ENCODE measurements at regions of chr7 and their contacts with region 1.

Region 1: GRCh38 chr7:50745336-50745735 is 37.4 kb downstream of the GRB10 start:
- DNase-seq: no peak
- ATAC-seq: no peak
- H3K4me3 ChIP-seq: no peak overlapping the region
- H3K4me3 Mint-ChIP-seq: no peak overlapping the region
- H3K27ac ChIP-seq: no peak overlapping the region
- H3K27ac Mint-ChIP-seq: no peak overlapping the region
- H3K4me1 ChIP-seq: peaks cover 4% of the 10 kb centered on the region
- H3K4me1 Mint-ChIP-seq: peaks cover 9% of the 10 kb centered on the region
- H3K27me3 ChIP-seq: no peaks in the 10 kb centered on the region
- H3K27me3 Mint-ChIP-seq: no peaks in the 10 kb centered on the region
- CTCF ChIP-seq: no peak

Region 2: DNA sequence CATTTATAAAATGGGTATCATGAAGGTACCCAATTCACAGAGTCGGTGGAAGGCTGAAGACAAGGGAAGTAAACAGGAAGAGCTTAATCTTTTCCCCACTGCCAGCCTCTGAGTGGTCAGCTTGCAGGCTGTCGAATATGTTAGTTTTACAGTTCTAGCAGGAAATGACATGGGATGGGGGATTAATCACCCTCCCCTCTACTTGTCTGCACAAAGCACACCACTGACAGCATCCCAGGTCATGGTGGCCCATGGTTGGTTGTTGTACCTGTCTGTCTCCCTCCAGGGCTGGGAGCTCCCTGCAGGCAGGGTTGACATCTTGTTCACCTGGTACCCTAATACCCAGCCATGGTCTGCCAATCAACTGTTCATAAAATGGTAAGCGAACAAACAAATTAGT is 18.3 kb before region 1 on chr7:
- CTCF ChIA-PET with region 1: no interaction called
- POLR2A ChIA-PET with region 1: no interaction called
- intact Hi-C with region 1: loop called in 1 of 2 experiments (anchors 2 kb)
- DNase-seq: no peak
- ATAC-seq: no peak
- H3K4me3 ChIP-seq: no peak overlapping the region
- H3K4me3 Mint-ChIP-seq: no peak overlapping the region
- H3K27ac ChIP-seq: no peak overlapping the region
- H3K27ac Mint-ChIP-seq: no peak overlapping the region
- H3K4me1 ChIP-seq: peaks cover 10% of the 10 kb centered on the region
- H3K4me1 Mint-ChIP-seq: peaks cover 11% of the 10 kb centered on the region
- H3K27me3 ChIP-seq: no peaks in the 10 kb centered on the region
- H3K27me3 Mint-ChIP-seq: no peaks in the 10 kb centered on the region
- CTCF ChIP-seq: no peak

Region 3: DNA sequence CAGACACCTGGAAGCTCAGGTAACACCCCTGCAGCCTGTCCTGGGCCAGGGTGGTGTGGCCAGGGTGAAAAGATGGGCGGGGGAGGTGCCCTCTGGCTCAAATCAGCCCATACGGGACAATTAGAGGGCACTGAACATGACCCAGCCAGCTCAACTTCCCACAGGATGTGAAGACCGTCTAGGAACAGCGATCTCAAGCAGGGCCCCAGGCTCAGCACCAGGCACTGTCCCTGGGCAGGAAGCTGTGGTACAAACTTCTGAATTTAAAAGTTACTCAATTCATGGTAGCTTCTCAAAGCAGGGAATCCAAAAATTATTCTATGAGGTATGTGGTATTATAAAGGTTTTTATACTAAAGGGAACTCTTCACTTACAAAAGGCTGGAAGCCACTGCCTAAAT is 42.5 kb after region 1 on chr7:
- CTCF ChIA-PET with region 1: no interaction called
- POLR2A ChIA-PET with region 1: no interaction called
- intact Hi-C with region 1: loop called (anchors 5 kb)
- DNase-seq: no peak
- ATAC-seq: no peak
- H3K4me3 ChIP-seq: no peak overlapping the region
- H3K4me3 Mint-ChIP-seq: no peak overlapping the region
- H3K27ac ChIP-seq: no peak overlapping the region
- H3K27ac Mint-ChIP-seq: no peak overlapping the region
- H3K4me1 ChIP-seq: peaks cover 22% of the 10 kb centered on the region
- H3K4me1 Mint-ChIP-seq: peaks cover 18% of the 10 kb centered on the region
- H3K27me3 ChIP-seq: peaks cover 15 to 29% of the 10 kb centered on the region in 2 experiments
- H3K27me3 Mint-ChIP-seq: peaks cover 68% of the 10 kb centered on the region
- CTCF ChIP-seq: no peak